ENCODE measurements at regions of chr16 and their contacts with region 1.

Region 1: DNA sequence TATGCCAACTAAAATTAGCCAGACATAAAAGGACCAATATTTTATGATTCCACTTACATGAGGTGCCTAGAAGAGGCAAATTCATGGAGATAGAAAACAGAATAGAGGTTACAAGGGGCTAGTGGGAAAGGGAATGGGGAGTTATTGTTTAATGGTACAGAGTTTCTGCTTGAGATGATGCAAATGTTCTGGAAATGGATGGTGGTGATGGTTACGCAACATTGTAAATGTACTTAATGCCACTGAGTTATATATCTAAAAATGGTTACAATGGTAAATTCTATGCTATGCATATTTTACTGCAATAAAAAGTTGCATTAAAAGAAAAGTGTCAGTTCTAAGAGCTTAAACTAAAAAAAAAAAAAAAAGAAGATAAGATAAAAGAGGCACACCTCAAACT is 17.9 kb downstream of the MT1X start:
- DNase-seq: no peak
- H3K4me3 ChIP-seq: no peak overlapping the region
- H3K27ac ChIP-seq: no peak overlapping the region
- H3K4me1 ChIP-seq: peaks cover 6% of the 10 kb centered on the region
- H3K27me3 ChIP-seq: no peaks in the 10 kb centered on the region
- CTCF ChIP-seq: no peak

Region 2: DNA sequence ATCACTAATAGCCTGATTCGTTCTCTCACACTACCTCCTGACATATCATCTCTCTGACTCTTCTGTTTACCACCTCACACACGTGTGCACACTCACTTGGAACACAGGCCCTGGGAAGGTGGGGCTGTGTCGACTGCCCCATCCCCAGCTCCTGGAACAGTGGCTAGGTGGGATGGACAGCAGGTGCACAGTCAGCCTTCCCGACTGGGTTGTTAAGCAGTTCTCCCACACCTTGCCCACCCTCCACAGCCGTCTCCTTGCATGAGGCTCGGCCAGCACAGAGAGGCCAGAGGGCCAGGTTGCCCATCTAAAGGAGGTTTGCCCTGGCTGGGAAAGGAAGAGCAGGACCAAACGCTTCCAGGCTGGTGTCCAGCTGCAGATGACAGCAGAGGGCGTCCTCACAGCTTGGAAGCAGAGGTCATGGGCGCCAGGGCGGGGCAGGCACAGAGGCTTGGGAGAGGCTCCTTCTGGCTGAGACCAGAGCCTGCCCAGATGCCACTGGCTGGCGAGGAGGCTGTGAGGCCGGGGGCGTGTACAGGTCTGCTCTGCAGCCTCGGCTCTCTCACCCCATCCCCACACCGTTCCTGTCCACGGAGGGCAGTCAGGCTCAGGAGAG is 367.6 kb before region 1 on chr16:
- CTCF ChIA-PET with region 1: interaction called, 11 read pairs
- dilution Hi-C with region 1: no loop called
- in situ Hi-C with region 1: no loop called
- intact Hi-C with region 1: loop called (anchors 2 kb)
- DNase-seq: peak; percentile 54
- H3K4me3 ChIP-seq: no peak overlapping the region
- H3K27ac ChIP-seq: no peak overlapping the region
- H3K4me1 ChIP-seq: peaks cover 38% of the 10 kb centered on the region
- H3K27me3 ChIP-seq: no peaks in the 10 kb centered on the region
- CTCF ChIP-seq: peak; percentile 7 to 53

Region 3: DNA sequence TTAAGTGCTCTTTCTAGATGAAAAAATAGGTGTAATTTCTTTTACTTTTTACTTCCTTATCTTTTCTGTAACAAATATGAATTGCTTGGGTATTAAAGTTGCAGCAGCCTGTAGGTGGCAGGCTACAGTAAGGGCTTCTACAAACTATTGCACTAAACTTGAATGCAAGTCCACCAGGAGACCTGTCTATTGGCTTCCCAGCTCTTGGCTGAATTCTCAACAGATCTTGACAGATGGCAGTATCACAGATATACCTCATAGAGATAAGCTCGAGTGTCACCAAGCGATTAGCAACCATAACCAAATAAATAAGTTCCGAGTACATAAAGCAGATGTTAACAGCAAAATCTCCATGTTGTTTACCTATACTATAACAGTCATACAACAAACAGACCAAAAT is 186.2 kb before region 1 on chr16:
- CTCF ChIA-PET with region 1: interaction called, 5 read pairs
- dilution Hi-C with region 1: no loop called
- in situ Hi-C with region 1: loop called in 1 of 2 experiments (anchors 10 kb)
- intact Hi-C with region 1: loop called (anchors 1 kb)
- DNase-seq: peak; percentile 59
- H3K4me3 ChIP-seq: no peak overlapping the region
- H3K27ac ChIP-seq: no peak overlapping the region
- H3K4me1 ChIP-seq: peaks cover 33% of the 10 kb centered on the region
- H3K27me3 ChIP-seq: no peaks in the 10 kb centered on the region
- CTCF ChIP-seq: peak; percentile 79 to 80

Region 4: GRCh38 chr16:56600398-56600999 is 99.7 kb before region 1 on chr16:
- CTCF ChIA-PET with region 1: interaction called, 14 read pairs
- dilution Hi-C with region 1: no loop called
- in situ Hi-C with region 1: loop called in 1 of 2 experiments (anchors 5 kb)
- intact Hi-C with region 1: loop called (anchors 1 kb)
- DNase-seq: peak; percentile 48
- H3K4me3 ChIP-seq: no peak overlapping the region
- H3K27ac ChIP-seq: no peak overlapping the region
- H3K4me1 ChIP-seq: peaks cover 6% of the 10 kb centered on the region
- H3K27me3 ChIP-seq: no peaks in the 10 kb centered on the region
- CTCF ChIP-seq: peak; percentile 75 to 79

Region 5: DNA sequence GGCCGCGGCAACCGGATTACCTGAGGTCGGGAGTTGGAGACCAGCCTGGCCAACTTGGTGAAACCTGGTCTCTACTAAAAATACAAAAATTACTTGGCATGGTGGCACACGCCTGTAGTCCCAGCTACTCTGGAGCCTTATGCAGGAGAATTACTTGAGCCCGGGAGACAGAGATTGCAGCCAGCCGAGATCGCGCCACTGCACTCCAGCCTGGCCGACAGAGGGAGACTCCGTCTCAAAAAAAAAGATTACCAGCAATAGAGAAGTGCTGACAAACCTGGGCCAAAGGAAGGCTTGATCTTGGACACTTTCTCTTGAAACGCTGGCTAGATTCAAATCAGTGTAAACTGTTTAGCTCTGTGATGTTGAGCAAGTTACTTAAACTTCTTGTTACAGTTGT is 26.3 kb before region 1 on chr16:
- CTCF ChIA-PET with region 1: no interaction called
- dilution Hi-C with region 1: no loop called
- in situ Hi-C with region 1: no loop called
- intact Hi-C with region 1: loop called (anchors 1 kb)
- DNase-seq: peak; percentile 37
- H3K4me3 ChIP-seq: no peak overlapping the region
- H3K27ac ChIP-seq: no peak overlapping the region
- H3K4me1 ChIP-seq: no peaks in the 10 kb centered on the region
- H3K27me3 ChIP-seq: no peaks in the 10 kb centered on the region
- CTCF ChIP-seq: peak; percentile 51 to 80

Region 6: GRCh38 chr16:56836410-56837230 is 136.4 kb after region 1 on chr16:
- CTCF ChIA-PET with region 1: no interaction called
- dilution Hi-C with region 1: no loop called
- in situ Hi-C with region 1: no loop called
- intact Hi-C with region 1: no loop called
- DNase-seq: no peak
- H3K4me3 ChIP-seq: no peak overlapping the region
- H3K27ac ChIP-seq: no peak overlapping the region
- H3K4me1 ChIP-seq: peaks cover 15% of the 10 kb centered on the region
- H3K27me3 ChIP-seq: no peaks in the 10 kb centered on the region
- CTCF ChIP-seq: no peak